ENCODE measurements at regions of chr5 and their contacts with region 1.

Region 1: DNA sequence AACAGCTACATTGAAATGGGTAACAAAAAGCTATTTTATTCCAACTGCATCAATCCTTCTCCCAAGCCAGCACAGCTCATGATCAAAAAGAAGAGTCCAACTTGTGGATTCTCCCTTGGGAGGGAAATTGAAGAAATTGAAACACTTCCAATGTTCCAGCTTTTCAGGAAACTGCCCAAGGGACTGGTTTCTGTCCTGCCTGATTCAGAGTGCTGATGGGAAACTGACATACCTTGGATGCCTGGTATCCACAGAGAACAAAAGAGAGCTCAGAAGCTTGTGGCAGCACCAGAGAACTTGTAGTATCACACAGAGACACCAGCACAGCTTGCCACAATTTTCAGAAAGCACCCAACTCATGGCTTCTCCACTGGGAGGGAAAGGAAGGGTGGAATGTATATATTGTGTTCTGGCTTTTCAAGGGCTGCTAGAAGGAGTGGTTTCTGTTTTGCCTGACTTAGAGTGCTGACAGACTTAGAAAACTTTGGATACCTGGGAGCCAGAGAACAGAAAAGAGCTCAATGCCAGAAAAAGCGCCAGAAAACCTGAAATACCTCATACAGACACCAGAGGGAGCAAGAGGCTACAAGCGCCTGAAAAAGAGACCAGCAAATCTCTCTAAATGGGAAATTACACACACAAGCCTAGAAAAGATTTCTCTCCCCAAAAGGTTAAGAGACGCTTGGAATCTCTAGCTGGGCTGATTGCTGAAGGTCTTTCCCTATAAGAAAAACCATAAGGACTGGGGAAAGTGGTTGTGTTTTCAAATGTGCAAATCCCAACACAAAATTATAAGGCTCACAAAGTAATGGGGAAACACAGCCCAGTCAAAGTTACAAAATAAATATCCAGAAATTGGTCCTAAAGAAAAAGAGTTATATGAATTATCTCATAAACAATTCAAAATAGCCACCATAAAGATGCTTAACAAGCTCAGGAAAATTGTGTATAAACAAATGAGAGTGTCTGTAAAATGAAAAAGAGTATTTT is 178.8 kb downstream of the SPOCK1 start:
- DNase-seq: peak; percentile 69
- H3K4me3 ChIP-seq: no peak overlapping the region
- H3K27ac ChIP-seq: no peak overlapping the region
- H3K4me1 ChIP-seq: no peaks in the 10 kb centered on the region
- H3K27me3 ChIP-seq: peaks cover 14% of the 10 kb centered on the region
- CTCF ChIP-seq: peak; percentile 76

Region 2: DNA sequence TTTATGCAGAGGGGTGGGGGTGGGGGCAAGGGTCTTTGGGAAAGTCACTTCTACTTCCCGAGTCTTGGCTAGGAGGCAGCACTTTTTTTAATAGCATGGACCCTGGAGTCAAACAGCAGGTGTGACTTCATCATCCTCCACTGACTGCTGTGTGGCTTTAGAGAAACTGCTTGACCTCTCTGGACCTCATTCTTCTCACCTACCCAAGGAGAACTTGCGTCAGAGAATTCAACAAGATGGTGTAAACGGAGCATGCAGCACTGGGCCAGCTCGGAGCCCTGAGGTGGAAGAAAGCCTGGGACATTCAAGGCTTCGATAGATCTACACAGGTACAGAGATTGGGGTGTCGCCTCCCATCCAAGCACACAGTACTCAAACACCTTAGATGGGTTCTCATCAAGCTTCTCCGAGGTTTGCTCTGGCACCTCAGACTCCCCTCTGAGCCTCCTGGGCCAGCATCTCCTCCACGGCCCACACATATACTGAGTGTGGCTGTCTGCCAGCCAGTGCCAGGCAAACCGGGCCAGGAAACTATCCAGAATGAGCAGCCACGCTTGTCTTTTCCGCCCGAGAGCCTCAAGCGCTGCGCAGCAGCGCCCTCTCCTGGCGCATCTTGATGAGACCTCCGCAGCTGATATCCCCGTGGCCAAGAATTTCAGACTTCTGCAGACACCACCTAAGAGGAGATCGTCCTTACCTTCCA is 1490.5 kb before region 1 on chr5:
- CTCF ChIA-PET with region 1: no interaction called
- POLR2A ChIA-PET with region 1: interaction called, 12 read pairs
- intact Hi-C with region 1: no loop called
- DNase-seq: peak; percentile 84
- H3K4me3 ChIP-seq: no peak overlapping the region
- H3K27ac ChIP-seq: no peak overlapping the region
- H3K4me1 ChIP-seq: no peaks in the 10 kb centered on the region
- H3K27me3 ChIP-seq: peaks cover 36% of the 10 kb centered on the region
- CTCF ChIP-seq: peak; percentile 93

Region 3: DNA sequence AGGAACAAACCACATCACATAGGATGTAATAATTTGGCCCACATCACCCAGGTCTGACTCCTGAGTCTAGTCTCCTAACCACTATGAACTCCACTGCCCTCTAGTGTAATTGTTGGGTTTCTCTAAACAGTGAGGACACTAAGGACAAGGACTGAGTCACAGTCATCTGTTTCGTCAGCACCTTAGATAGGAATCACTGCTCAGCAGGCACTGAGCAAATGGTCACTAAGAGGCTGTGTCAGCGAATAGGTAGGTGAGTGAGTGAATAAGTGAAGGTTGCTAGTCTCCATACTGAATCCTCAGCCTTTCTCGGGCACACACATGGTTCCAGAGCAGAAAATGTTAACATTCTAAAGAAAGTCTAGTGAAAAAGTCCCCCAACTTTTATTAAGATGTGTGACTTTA is 99.8 kb before region 1 on chr5:
- CTCF ChIA-PET with region 1: no interaction called
- POLR2A ChIA-PET with region 1: no interaction called
- intact Hi-C with region 1: no loop called
- DNase-seq: peak; percentile 60
- H3K4me3 ChIP-seq: no peak overlapping the region
- H3K27ac ChIP-seq: no peak overlapping the region
- H3K4me1 ChIP-seq: no peaks in the 10 kb centered on the region
- H3K27me3 ChIP-seq: peaks cover 2% of the 10 kb centered on the region
- CTCF ChIP-seq: peak; percentile 60

Region 4: GRCh38 chr5:137498736-137499505 is 178.6 kb after region 1 on chr5 and contains the start of gene SPOCK1:
- CTCF ChIA-PET with region 1: interaction called, 4 read pairs
- POLR2A ChIA-PET with region 1: no interaction called
- intact Hi-C with region 1: loop called (anchors 2 kb)
- DNase-seq: peak; percentile 85
- H3K4me3 ChIP-seq: peak within 1 kb of the TSS; percentile 42
- H3K27ac ChIP-seq: no peak within 1 kb of the TSS
- H3K4me1 ChIP-seq: peaks cover 4% of the 10 kb centered on the region
- H3K27me3 ChIP-seq: peaks cover 48% of the 10 kb centered on the region
- CTCF ChIP-seq: peak; percentile 63
- total RNA-seq, gene SPOCK1: 2.5 and 4.0 TPM in 2 replicates

Region 5: GRCh38 chr5:137605411-137605810 is 285.1 kb after region 1 on chr5:
- CTCF ChIA-PET with region 1: interaction called, 16 read pairs
- POLR2A ChIA-PET with region 1: no interaction called
- intact Hi-C with region 1: loop called (anchors 2 kb)
- DNase-seq: peak; percentile 52
- H3K4me3 ChIP-seq: no peak overlapping the region
- H3K27ac ChIP-seq: no peak overlapping the region
- H3K4me1 ChIP-seq: no peaks in the 10 kb centered on the region
- H3K27me3 ChIP-seq: peaks cover 14% of the 10 kb centered on the region
- CTCF ChIP-seq: peak; percentile 54

Measured in A673 (cell line).